Dorsolateral prefrontal cortex (tissue), 120 donors: ENCODE measurements at regions of chr11 and their contacts with region 1.

Region 1: GRCh38 chr11:9757809-9758636 is 94.1 kb downstream of the SWAP70 start:
- DNase-seq: peak; percentile 63 to 89 (median 78)
- H3K4me3 ChIP-seq: peak overlapping the region; percentile 62 to 98 (median 83)
- H3K27ac ChIP-seq: peak overlapping the region in 57 of 59 donors; percentile 36 to 93 (median 80)
- H3K27me3 ChIP-seq: no peaks in the 10 kb centered on the region
- CTCF ChIP-seq: peak; percentile 32 to 99 (median 83)

Region 2: DNA sequence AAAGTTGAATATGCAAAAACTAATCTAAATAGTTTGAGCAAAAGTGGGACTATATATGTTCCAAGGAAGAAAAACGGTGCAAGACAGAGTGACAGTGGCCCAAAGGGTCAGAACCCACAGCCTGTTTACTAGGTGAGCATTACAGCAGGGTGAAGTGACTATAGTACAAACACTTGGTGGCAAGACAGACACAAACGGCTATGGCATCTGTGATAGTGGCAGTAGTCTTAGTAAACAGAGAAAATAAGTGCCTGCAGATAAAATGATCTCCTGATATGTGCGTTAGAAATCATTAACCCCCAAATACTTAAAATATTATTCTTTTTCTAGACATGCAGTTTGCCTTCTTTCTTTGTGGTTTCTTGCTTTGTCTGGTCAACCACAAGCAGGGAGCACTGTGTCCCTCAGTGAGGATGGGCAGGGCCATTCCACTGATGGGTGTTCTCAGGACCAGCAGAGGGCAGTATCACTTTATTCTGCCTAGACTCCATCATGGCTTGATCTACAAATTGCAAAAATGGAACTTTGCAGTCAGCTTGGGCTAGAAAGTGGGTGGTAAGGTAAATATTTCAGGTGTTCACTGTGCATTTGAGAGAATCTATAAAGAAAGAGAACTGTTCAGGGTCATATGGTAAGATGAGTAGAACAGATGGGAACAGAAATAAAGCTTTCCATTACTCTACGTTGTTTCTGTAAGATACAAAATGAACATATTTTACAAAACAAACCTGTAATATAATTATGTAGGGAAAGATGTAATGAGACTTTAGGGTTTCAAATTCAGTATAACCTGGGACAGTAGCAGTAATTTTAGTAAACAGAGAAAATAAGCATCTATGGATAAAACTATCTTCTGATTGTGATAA is 104.1 kb after region 1 on chr11:
- intact Hi-C with region 1: loop called in 1 of 2 experiments (anchors 5 kb)
- DNase-seq: peak in 6 of 10 donors; percentile 11 to 45 (median 32)
- H3K4me3 ChIP-seq: no peak overlapping the region
- H3K27ac ChIP-seq: no peak overlapping the region
- H3K27me3 ChIP-seq: no peaks in the 10 kb centered on the region
- CTCF ChIP-seq: peak; percentile 33 to 82 (median 68)

Region 3: DNA sequence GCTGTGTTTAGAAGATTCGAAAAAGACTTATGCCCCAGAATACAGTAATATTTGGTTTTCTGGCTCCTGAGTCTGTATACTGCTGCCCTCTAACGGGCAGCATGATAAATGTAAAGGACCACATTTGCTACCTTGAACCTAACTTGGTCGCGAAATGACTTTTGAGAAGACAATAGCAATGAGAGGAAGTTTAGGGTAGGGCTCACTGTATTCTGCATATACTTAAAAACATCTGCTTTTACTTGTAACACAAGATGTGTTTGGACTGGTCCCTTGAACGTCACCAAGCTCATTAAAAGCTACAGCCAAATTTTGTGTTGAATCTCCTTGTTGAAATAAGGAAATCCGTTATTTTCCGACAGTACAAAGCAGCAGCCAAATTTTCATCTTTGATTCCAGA is 215.0 kb after region 1 on chr11:
- intact Hi-C with region 1: loop called (anchors 2 kb)
- DNase-seq: no peak
- H3K4me3 ChIP-seq: peak overlapping the region in 1 of 59 donors; percentile 19
- H3K27ac ChIP-seq: no peak overlapping the region
- H3K27me3 ChIP-seq: no peaks in the 10 kb centered on the region
- CTCF ChIP-seq: peak; percentile 37 to 79 (median 68)

Region 4: DNA sequence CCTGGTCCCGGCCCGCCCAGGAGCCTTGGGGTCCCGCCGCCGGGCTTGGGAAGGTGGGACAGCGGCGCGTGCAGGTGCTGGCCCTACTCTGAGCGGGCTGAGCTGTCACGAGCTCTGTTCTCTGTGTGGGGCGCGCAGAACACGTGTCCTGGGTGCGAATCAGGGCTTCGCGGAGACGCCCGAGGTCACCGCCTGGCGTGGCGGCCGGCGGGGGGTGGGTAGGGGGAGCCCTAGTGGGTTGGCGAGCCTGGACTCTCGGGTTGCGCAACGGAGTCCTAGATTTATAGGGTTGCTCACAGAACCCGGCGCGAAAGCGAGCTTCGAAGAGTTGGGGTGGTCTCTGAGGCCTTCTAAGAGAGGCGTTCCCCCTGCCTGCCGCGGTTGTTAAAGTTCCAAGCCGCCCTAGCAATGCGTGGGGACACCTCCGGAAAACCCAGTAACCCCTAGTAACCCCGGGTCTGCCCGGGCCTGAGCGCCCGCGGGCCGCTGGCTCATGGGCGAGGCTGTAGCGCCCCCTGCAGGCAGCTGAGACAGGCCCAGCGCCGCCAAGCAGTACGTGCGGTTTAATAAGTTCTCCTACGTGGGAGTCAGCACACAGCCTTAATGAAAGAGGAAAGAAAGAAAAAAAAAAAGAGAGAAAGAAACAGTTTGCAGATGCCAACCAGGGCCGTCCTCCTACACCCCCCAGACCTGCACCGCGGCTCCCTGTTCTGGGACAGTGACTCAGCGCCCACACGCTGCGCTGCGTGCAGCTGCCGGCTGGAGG is 549.6 kb after region 1 on chr11:
- intact Hi-C with region 1: loop called (anchors 2 to 5 kb)
- DNase-seq: peak; percentile 49 to 87 (median 74)
- H3K4me3 ChIP-seq: peak overlapping the region; percentile 51 to 90 (median 76)
- H3K27ac ChIP-seq: peak overlapping the region in 47 of 59 donors; percentile 3 to 95 (median 53)
- H3K27me3 ChIP-seq: peaks cover 0 to 6% (median 0%) of the 10 kb centered on the region in 45 donors
- CTCF ChIP-seq: peak; percentile 94 to 100 (median 98)

Region 5: GRCh38 chr11:10322830-10323792 is 565.1 kb after region 1 on chr11:
- intact Hi-C with region 1: loop called (anchors 5 kb)
- DNase-seq: peak in 1 of 10 donors; percentile 21
- H3K4me3 ChIP-seq: peak overlapping the region in 8 of 59 donors; percentile 3 to 35 (median 21)
- H3K27ac ChIP-seq: peak overlapping the region in 13 of 59 donors; percentile 4 to 68 (median 31)
- H3K27me3 ChIP-seq: no peaks in the 10 kb centered on the region
- CTCF ChIP-seq: peak; percentile 53 to 82 (median 68)

Region 6: DNA sequence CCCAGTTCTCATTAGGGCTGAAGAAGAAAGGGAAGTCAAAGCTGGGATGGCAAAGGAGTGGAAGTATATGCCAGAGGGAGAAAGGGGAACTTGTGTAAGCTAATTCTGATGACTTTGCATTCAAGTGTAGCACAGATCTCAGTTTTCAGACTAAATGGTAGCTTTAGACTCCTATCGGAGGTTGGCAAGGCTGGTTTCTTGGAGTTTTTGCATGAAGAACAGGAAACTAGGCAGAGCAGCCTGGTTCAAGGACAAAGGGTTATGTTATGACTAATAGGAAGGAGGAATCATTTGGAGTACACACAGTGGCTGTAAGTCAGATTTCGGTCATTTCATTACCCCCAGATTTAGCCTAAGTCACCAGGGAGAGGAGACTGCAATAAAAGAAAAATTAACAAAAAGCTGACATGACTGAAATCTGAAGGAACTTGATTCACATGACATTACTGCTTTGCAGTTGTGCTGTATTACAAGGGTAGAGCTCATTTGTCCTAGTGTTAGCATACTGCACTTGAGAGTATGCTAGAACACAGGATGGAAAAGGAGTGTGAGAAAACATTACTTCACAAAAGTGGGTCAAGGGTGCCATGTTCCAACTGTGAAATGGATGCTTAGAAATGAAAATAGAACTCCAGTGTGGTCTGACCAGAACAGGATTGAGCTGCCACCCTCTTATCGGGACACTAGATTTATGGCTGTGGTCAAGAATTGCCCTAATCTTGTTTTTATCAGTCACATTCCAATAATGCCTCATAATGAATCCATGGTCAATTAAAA is 570.5 kb after region 1 on chr11:
- intact Hi-C with region 1: loop called (anchors 5 kb)
- DNase-seq: no peak
- H3K4me3 ChIP-seq: no peak overlapping the region
- H3K27ac ChIP-seq: peak overlapping the region in 2 of 59 donors; percentile 8 to 19
- H3K27me3 ChIP-seq: no peaks in the 10 kb centered on the region
- CTCF ChIP-seq: no peak

Region 7: GRCh38 chr11:10735481-10736475 is 977.8 kb after region 1 on chr11:
- intact Hi-C with region 1: loop called in 1 of 2 experiments (anchors 5 kb)
- DNase-seq: peak; percentile 83 to 93 (median 90)
- H3K4me3 ChIP-seq: peak overlapping the region in 55 of 59 donors; percentile 2 to 60 (median 37)
- H3K27ac ChIP-seq: peak overlapping the region in 49 of 59 donors; percentile 24 to 82 (median 69)
- H3K27me3 ChIP-seq: no peaks in the 10 kb centered on the region
- CTCF ChIP-seq: peak; percentile 92 to 100 (median 99)